ENCODE measurements at regions of chr12 and their contacts with region 1.

Region 1: GRCh38 chr12:49232940-49233841 is 31.7 kb upstream of the TUBA1C start:
- DNase-seq: no peak
- ATAC-seq: no peak
- H3K4me3 Mint-ChIP-seq: no peak overlapping the region
- H3K27ac Mint-ChIP-seq: no peak overlapping the region
- H3K4me1 Mint-ChIP-seq: peaks cover 22% of the 10 kb centered on the region
- H3K27me3 Mint-ChIP-seq: peaks cover 6% of the 10 kb centered on the region

Region 2: GRCh38 chr12:49188914-49189367 is 44.2 kb before region 1 on chr12 and contains the start of gene TUBA1A:
- CTCF ChIA-PET with region 1: interaction called, 28 read pairs
- DNase-seq: peak; percentile 99
- ATAC-seq: peak; percentile 88
- H3K4me3 Mint-ChIP-seq: peak within 1 kb of the TSS; percentile 95
- H3K27ac Mint-ChIP-seq: peak within 1 kb of the TSS; percentile 99
- H3K4me1 Mint-ChIP-seq: peaks cover 21% of the 10 kb centered on the region
- H3K27me3 Mint-ChIP-seq: peaks cover 2% of the 10 kb centered on the region
- total RNA-seq, gene TUBA1A: 91.0 to 96.5 TPM

Region 3: DNA sequence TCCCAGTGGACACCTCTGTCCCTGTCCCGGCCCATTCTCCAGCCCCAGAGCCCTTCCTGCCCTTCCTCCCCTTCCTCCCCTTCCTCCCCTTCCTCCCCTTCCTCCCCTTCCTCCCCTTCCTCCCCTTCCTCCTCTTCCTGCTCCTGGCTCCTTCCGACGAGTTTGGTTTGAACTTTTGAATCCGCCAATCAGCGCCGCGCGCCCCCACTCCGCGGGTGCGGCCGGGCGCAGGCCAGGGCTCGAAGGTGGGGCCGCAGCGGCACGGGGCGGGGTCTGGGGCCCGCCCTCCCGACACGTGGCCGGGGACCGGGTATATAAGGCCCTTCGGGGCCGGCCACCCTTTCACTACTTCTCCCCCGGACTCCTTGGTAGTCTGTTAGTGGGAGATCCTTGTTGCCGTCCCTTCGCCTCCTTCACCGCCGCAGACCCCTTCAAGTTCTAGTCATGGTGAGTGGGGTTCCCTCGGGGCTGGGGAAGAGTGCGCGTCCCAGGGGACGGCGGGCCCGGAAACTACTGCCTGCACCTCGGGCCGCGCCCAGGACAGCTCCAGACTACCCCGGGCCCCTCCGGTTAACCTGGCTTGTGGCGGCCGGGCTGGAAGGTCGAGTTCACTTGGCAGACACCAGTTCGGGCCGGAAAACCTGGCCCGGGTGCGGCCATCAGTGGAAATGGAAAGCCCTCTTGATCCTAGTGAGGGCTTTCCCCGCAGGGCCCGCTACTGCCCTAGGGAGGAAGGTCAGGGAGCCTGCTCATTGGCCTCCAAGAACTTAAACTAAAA is 31.7 kb after region 1 on chr12 and contains the start of gene TUBA1C:
- CTCF ChIA-PET with region 1: interaction called, 12 read pairs
- DNase-seq: peak; percentile 93
- ATAC-seq: peak; percentile 88
- H3K4me3 Mint-ChIP-seq: peak within 1 kb of the TSS; percentile 94
- H3K27ac Mint-ChIP-seq: peak within 1 kb of the TSS; percentile 97
- H3K4me1 Mint-ChIP-seq: peaks cover 48% of the 10 kb centered on the region
- H3K27me3 Mint-ChIP-seq: no peaks in the 10 kb centered on the region
- total RNA-seq, gene TUBA1C: 264 to 266 TPM

Measured in activated CD8-positive, alpha-beta memory T cell treated with anti-CD3 and anti-CD28 coated beads, Interleukin-2, amount 10 ng/mL, durations not matched to agents 7 days and 5 days (primary cell).